Vagina (tissue), 2 donors: ENCODE measurements at regions of chr3 and their contacts with region 1.

Region 1: GRCh38 chr3:133256787-133257483 is 142.9 kb upstream of the BFSP2 start:
- DNase-seq: no peak
- H3K4me3 ChIP-seq: no peak overlapping the region
- H3K27ac ChIP-seq: no peak overlapping the region
- H3K4me1 ChIP-seq: no peaks in the 10 kb centered on the region
- H3K27me3 ChIP-seq: no peaks in the 10 kb centered on the region
- CTCF ChIP-seq: no peak
- POLR2A ChIP-seq: no peak

Region 2: GRCh38 chr3:133633439-133633838 is 376.5 kb after region 1 on chr3:
- intact Hi-C with region 1: no loop called
- DNase-seq: no peak
- H3K4me3 ChIP-seq: no peak overlapping the region
- H3K27ac ChIP-seq: no peak overlapping the region
- H3K4me1 ChIP-seq: no peaks in the 10 kb centered on the region
- H3K27me3 ChIP-seq: no peaks in the 10 kb centered on the region
- CTCF ChIP-seq: no peak
- POLR2A ChIP-seq: no peak

Region 3: DNA sequence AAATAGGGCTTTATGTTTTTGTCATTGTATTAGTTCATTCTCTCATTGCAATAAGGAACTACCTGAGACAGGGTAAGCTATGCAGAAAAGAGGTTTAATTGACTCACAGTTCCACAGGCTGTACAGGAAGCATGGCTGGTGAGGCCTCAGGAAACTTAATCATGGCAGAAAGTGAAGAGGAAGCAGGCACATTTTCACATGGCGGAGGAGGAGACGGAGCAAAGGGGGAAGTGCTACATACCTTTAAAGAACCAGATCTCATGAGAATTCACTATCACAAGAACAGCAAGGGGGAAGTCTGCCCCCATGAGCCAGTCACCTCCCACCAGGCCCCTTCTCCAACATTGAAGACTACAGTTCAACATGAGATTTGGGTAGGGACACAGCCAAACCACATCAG is 1254.6 kb after region 1 on chr3:
- intact Hi-C with region 1: loop called (anchors 5 kb)
- DNase-seq: no peak
- H3K4me3 ChIP-seq: no peak overlapping the region
- H3K27ac ChIP-seq: no peak overlapping the region
- H3K4me1 ChIP-seq: no peaks in the 10 kb centered on the region
- H3K27me3 ChIP-seq: no peaks in the 10 kb centered on the region
- CTCF ChIP-seq: no peak
- POLR2A ChIP-seq: no peak